ENCODE measurements at regions of chr1 and their contacts with region 1.

Region 1: DNA sequence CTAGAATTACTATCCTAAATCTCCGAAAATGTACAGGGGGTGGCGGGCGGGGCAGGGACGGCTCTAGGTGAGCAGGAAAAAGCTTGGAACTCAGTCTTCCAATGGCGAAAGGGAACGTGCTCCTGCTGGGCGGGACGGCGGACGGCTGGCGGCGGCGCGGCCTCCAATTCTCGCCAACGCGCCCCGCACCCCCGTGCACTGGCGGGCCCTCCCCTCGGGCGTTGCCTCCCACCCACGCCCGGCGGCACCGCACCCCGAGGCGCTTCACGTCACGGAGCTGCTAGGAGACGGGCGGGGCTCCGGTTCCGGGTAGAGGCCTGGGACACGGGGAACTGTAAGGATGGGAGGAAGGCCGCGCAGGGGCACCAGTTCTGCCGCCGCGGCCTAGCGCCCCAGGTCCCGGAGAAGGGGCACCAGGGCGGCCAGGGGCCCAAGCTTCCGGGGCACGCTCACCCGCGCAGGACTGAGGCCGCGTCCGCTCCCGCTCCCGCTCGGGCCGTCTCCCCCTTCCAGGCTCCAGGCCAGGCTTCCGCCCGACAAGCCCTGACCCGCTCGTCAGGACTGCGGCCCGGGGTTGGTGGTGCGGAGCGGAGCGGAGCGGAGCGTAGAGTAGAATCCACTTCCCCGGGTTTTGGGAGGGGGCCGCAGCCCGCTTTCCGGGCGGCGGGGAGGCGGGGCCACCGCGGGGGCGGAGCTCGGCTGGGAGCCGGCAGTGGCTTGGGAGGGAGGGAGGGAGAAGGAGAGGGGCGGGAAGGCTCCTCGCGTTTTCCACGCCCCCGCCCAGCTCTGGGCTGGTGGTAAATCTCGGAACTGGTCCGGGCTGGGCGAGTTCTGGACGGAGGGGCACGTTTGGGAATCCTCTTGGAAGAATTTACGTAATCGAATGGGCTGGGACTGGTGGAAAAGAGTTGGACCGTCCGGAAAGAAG is at the start of gene DDX59:
- DNase-seq: peak; percentile 99
- H3K4me3 ChIP-seq: peak within 1 kb of the TSS; percentile 71 to 95 (median 80)
- H3K27ac ChIP-seq: peak within 1 kb of the TSS; percentile 95 to 100 (median 98)
- H3K4me1 ChIP-seq: peaks cover 18 to 47% (median 39%) of the 10 kb centered on the region in 4 donors
- H3K27me3 ChIP-seq: no peaks in the 10 kb centered on the region
- CTCF ChIP-seq: no peak
- EP300 ChIP-seq: peak; percentile 92
- POLR2A ChIP-seq: peak; percentile 95
- total RNA-seq, gene DDX59: 18.1 to 30.0 (median 21.7) TPM

Region 2: GRCh38 chr1:200620273-200621131 is 49.1 kb before region 1 on chr1 and contains the start of gene KIF14:
- intact Hi-C with region 1: loop called (anchors 5 kb)
- DNase-seq: peak; percentile 97
- H3K4me3 ChIP-seq: peak within 1 kb of the TSS; percentile 63 to 77 (median 71)
- H3K27ac ChIP-seq: peak within 1 kb of the TSS; percentile 29 to 65 (median 50)
- H3K4me1 ChIP-seq: peaks cover 12 to 34% (median 22%) of the 10 kb centered on the region in 4 donors
- H3K27me3 ChIP-seq: peaks cover 0 to 4% (median 0%) of the 10 kb centered on the region in 4 donors
- CTCF ChIP-seq: no peak
- EP300 ChIP-seq: no peak
- POLR2A ChIP-seq: no peak
- total RNA-seq, gene KIF14: under 0.01 to 0.17 (median 0.17) TPM in 3 of 4 donors, not detected in the other

Region 3: GRCh38 chr1:200767321-200767720 is 97.7 kb after region 1 on chr1:
- intact Hi-C with region 1: no loop called
- DNase-seq: no peak
- H3K4me3 ChIP-seq: no peak overlapping the region
- H3K27ac ChIP-seq: no peak overlapping the region
- H3K4me1 ChIP-seq: peaks cover 0 to 12% (median 4%) of the 10 kb centered on the region in 4 donors
- H3K27me3 ChIP-seq: no peaks in the 10 kb centered on the region
- CTCF ChIP-seq: no peak
- EP300 ChIP-seq: no peak
- POLR2A ChIP-seq: no peak

Region 4: GRCh38 chr1:200802865-200803512 is 133.4 kb after region 1 on chr1:
- intact Hi-C with region 1: loop called (anchors 5 kb)
- DNase-seq: peak; percentile 93
- H3K4me3 ChIP-seq: no peak overlapping the region
- H3K27ac ChIP-seq: peak overlapping the region in 1 of 4 donors; percentile 14
- H3K4me1 ChIP-seq: peaks cover 0 to 13% (median 10%) of the 10 kb centered on the region in 4 donors
- H3K27me3 ChIP-seq: no peaks in the 10 kb centered on the region
- CTCF ChIP-seq: peak; percentile 92 to 95 (median 93)
- EP300 ChIP-seq: no peak
- POLR2A ChIP-seq: no peak

Measured in esophagus muscularis mucosa (tissue), 4 donors.